Mammary epithelial cell (primary cell): ENCODE measurements at regions of chr1 and their contacts with region 1.

Region 1: GRCh38 chr1:28792644-28793121 is 19.3 kb upstream of the OPRD1 start:
- DNase-seq: no peak
- H3K4me3 ChIP-seq: no peak overlapping the region
- H3K27ac ChIP-seq: no peak overlapping the region
- H3K4me1 ChIP-seq: no peaks in the 10 kb centered on the region
- H3K27me3 ChIP-seq: no peaks in the 10 kb centered on the region
- CTCF ChIP-seq: peak in 1 of 2 donors; percentile 1

Region 2: GRCh38 chr1:28642847-28643635 is 149.6 kb before region 1 on chr1 and contains the start of gene TAF12:
- CTCF ChIA-PET with region 1: no interaction called
- dilution Hi-C with region 1: no loop called
- in situ Hi-C with region 1: no loop called
- intact Hi-C with region 1: no loop called
- DNase-seq: peak; percentile 97
- H3K4me3 ChIP-seq: peak within 1 kb of the TSS; percentile 52 to 72 (median 70)
- H3K27ac ChIP-seq: peak within 1 kb of the TSS; percentile 79
- H3K4me1 ChIP-seq: peaks cover 15% of the 10 kb centered on the region
- H3K27me3 ChIP-seq: no peaks in the 10 kb centered on the region
- CTCF ChIP-seq: peak in 1 of 2 donors; percentile 55
- total RNA-seq, gene TAF12: 22.0 to 27.1 TPM

Region 3: GRCh38 chr1:28736450-28737306 is 56.0 kb before region 1 on chr1 and contains the start of gene YTHDF2:
- CTCF ChIA-PET with region 1: no interaction called
- dilution Hi-C with region 1: no loop called
- in situ Hi-C with region 1: no loop called
- intact Hi-C with region 1: no loop called
- DNase-seq: peak; percentile 96
- H3K4me3 ChIP-seq: peak within 1 kb of the TSS; percentile 89 to 99 (median 92)
- H3K27ac ChIP-seq: peak within 1 kb of the TSS; percentile 81
- H3K4me1 ChIP-seq: peaks cover 25% of the 10 kb centered on the region
- H3K27me3 ChIP-seq: no peaks in the 10 kb centered on the region
- CTCF ChIP-seq: peak; percentile 66 to 92
- total RNA-seq, gene YTHDF2: 75.8 to 84.7 TPM

Region 4: DNA sequence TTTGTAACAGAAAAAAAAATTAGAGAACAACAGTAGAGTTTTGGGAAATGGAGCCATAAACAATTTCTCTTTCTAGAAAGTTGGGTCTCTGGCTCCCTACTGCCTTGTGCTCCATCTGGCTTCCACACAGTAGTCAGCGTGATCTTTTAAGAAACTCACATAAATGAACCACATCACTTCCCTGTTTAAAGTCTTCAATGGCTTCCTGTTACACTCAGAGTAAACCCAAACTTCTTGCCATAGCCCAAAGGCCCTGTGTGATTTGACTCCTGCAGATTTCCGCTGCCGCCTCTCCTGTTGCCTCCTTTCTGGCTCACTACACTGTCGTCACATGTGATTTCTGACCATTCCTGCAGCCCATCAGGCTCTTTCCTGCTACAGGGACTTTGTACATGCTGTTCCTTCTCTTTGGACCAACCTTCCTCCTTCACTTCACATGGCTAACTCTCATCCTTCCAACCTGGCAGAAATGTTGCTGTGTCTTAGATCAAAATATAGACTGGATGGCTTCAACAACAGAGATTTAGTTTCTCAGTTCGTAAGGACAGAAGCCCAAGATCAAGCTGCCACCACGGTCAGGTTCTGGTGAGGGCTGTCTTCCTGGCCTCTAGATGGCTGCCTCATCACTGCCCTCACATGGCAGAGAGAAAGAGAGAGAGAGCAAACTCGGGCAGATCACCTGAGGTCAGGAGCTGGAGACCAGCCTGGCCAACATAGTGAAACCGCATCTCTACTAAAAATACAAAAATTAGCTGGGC is 53.3 kb after region 1 on chr1:
- CTCF ChIA-PET with region 1: no interaction called
- dilution Hi-C with region 1: no loop called
- in situ Hi-C with region 1: no loop called
- intact Hi-C with region 1: loop called (anchors 2 kb)
- DNase-seq: peak; percentile 11
- H3K4me3 ChIP-seq: no peak overlapping the region
- H3K27ac ChIP-seq: no peak overlapping the region
- H3K4me1 ChIP-seq: no peaks in the 10 kb centered on the region
- H3K27me3 ChIP-seq: no peaks in the 10 kb centered on the region
- CTCF ChIP-seq: peak in 1 of 2 donors; percentile 14

Region 5: GRCh38 chr1:28860332-28861073 is 67.8 kb after region 1 on chr1:
- CTCF ChIA-PET with region 1: no interaction called
- dilution Hi-C with region 1: loop called (anchors 10 kb)
- in situ Hi-C with region 1: loop called in 1 of 2 experiments (anchors 5 kb)
- intact Hi-C with region 1: no loop called
- DNase-seq: peak; percentile 71
- H3K4me3 ChIP-seq: no peak overlapping the region
- H3K27ac ChIP-seq: no peak overlapping the region
- H3K4me1 ChIP-seq: no peaks in the 10 kb centered on the region
- H3K27me3 ChIP-seq: peaks cover 1% of the 10 kb centered on the region
- CTCF ChIP-seq: no peak

Region 6: DNA sequence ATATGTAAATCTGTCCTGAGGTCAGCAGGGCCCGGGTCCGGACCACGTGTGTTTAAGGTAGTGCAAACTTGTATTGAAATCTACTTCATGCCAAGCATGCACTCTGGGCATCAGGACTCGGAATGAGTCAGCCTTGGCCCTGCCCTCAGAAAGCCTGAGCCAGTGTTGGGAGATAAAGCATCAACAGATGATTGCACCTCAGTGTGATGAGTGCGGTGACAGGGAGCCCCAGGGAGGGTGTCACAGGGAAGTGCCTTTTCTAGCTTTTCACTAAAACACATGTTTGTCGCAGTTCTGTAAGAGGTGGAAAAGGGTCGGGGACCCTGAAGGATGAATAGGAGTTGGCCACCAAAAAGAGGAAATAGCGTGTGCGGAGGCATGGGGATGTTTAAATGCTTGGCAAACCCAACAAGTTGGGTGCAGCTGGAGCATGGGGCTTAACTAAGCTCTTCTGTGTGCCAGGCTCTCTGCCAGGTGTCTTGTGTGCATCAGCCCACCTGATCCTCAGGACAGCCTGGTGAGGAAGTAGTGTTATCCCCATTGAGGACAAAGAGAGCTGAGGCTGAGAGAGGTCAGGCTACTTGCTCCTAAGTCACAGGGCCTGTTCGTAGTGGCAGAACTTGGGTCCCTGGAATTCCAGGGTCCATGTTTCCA is 73.4 kb after region 1 on chr1:
- CTCF ChIA-PET with region 1: no interaction called
- dilution Hi-C with region 1: loop called (anchors 10 kb)
- in situ Hi-C with region 1: loop called in 1 of 2 experiments (anchors 5 kb)
- intact Hi-C with region 1: no loop called
- DNase-seq: no peak
- H3K4me3 ChIP-seq: no peak overlapping the region
- H3K27ac ChIP-seq: no peak overlapping the region
- H3K4me1 ChIP-seq: no peaks in the 10 kb centered on the region
- H3K27me3 ChIP-seq: peaks cover 1% of the 10 kb centered on the region
- CTCF ChIP-seq: no peak

Region 7: GRCh38 chr1:28877132-28877781 is 84.6 kb after region 1 on chr1:
- CTCF ChIA-PET with region 1: no interaction called
- dilution Hi-C with region 1: no loop called
- in situ Hi-C with region 1: loop called in 1 of 2 experiments (anchors 5 kb)
- intact Hi-C with region 1: no loop called
- DNase-seq: peak; percentile 72
- H3K4me3 ChIP-seq: no peak overlapping the region
- H3K27ac ChIP-seq: no peak overlapping the region
- H3K4me1 ChIP-seq: peaks cover 6% of the 10 kb centered on the region
- H3K27me3 ChIP-seq: no peaks in the 10 kb centered on the region
- CTCF ChIP-seq: peak; percentile 91 to 94